ENCODE measurements at regions of chr15 and their contacts with region 1.

Region 1: DNA sequence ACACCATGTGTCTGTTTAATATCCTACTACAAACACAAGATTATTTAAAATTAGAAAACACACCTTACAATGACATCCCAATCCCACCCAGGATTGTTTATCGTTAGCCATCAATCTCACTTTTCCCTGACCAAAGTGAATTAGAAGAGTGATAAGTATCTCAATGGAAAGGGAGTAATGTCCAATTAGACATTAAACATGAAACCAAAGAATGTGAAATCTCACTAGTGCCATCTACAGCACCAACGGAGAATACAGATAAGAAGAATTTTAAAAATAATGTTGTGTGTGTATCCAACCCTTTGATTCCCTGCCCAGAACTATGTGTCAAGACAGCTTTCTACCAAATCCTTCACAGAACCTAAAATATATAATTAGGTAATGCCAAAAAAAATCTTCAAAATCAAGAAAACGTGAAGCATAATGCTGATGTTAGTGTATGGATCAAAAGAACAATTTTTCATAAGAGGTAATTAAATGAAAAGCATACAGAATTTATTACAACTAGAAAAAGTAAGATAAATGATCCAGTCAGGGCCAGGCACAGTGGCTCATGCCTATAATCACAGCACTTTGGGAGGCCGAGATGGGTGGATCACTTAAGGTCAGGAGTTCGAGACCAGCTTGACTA is 64.2 kb downstream of the SCAPER start:
- DNase-seq: peak; percentile 48
- H3K4me3 Mint-ChIP-seq: no peak overlapping the region
- H3K27ac Mint-ChIP-seq: no peak overlapping the region
- H3K4me1 Mint-ChIP-seq: peaks cover 18% of the 10 kb centered on the region
- H3K27me3 Mint-ChIP-seq: no peaks in the 10 kb centered on the region
- CTCF ChIP-seq: peak; percentile 57

Region 2: GRCh38 chr15:75817138-75817935 is 1023.6 kb before region 1 on chr15:
- CTCF ChIA-PET with region 1: no interaction called
- POLR2A ChIA-PET with region 1: no interaction called
- intact Hi-C with region 1: no loop called
- DNase-seq: no peak
- H3K4me3 Mint-ChIP-seq: no peak overlapping the region
- H3K27ac Mint-ChIP-seq: no peak overlapping the region
- H3K4me1 Mint-ChIP-seq: no peaks in the 10 kb centered on the region
- H3K27me3 Mint-ChIP-seq: no peaks in the 10 kb centered on the region
- CTCF ChIP-seq: no peak

Region 3: GRCh38 chr15:76433798-76434400 is 407.0 kb before region 1 on chr15:
- CTCF ChIA-PET with region 1: no interaction called
- POLR2A ChIA-PET with region 1: no interaction called
- intact Hi-C with region 1: no loop called
- DNase-seq: no peak
- H3K4me3 Mint-ChIP-seq: no peak overlapping the region
- H3K27ac Mint-ChIP-seq: peak overlapping the region; percentile 71
- H3K4me1 Mint-ChIP-seq: peaks cover 6% of the 10 kb centered on the region
- H3K27me3 Mint-ChIP-seq: no peaks in the 10 kb centered on the region
- CTCF ChIP-seq: no peak

Region 4: GRCh38 chr15:76730262-76730661 is 110.7 kb before region 1 on chr15:
- CTCF ChIA-PET with region 1: interaction called, 4 read pairs
- POLR2A ChIA-PET with region 1: no interaction called
- intact Hi-C with region 1: loop called (anchors 1 kb)
- DNase-seq: no peak
- H3K4me3 Mint-ChIP-seq: no peak overlapping the region
- H3K27ac Mint-ChIP-seq: no peak overlapping the region
- H3K4me1 Mint-ChIP-seq: no peaks in the 10 kb centered on the region
- H3K27me3 Mint-ChIP-seq: no peaks in the 10 kb centered on the region
- CTCF ChIP-seq: no peak

Region 5: DNA sequence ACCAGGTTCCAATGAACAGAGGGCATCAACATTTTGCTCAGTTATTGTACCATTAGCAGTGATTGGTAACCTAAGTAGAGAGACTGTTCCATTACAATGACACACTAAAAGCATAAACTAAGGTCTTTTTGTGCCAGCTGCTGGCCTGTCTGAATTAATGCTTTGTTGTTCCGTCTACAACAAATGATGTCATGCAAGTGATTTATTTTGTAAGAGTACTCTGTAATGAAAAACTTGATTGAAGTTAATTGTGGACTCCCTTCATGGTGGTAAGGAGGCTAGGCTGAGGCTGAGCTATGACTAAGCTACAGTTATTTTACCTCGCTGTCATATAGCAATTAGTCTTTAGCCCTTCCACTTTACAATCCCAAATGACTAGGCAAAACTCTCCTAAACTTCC is 113.8 kb after region 1 on chr15:
- CTCF ChIA-PET with region 1: no interaction called
- POLR2A ChIA-PET with region 1: no interaction called
- intact Hi-C with region 1: no loop called
- DNase-seq: no peak
- H3K4me3 Mint-ChIP-seq: no peak overlapping the region
- H3K27ac Mint-ChIP-seq: no peak overlapping the region
- H3K4me1 Mint-ChIP-seq: no peaks in the 10 kb centered on the region
- H3K27me3 Mint-ChIP-seq: no peaks in the 10 kb centered on the region
- CTCF ChIP-seq: no peak

Measured in MCF 10A (cell line).